Activated CD8-positive, alpha-beta T cell treated with anti-CD3 and anti-CD28 coated beads, Interleukin-2, amount 10 ng/mL, durations not matched to agents 7 days and 5 days (primary cell): ENCODE measurements at regions of chr10 and their contacts with region 1.

Region 1: DNA sequence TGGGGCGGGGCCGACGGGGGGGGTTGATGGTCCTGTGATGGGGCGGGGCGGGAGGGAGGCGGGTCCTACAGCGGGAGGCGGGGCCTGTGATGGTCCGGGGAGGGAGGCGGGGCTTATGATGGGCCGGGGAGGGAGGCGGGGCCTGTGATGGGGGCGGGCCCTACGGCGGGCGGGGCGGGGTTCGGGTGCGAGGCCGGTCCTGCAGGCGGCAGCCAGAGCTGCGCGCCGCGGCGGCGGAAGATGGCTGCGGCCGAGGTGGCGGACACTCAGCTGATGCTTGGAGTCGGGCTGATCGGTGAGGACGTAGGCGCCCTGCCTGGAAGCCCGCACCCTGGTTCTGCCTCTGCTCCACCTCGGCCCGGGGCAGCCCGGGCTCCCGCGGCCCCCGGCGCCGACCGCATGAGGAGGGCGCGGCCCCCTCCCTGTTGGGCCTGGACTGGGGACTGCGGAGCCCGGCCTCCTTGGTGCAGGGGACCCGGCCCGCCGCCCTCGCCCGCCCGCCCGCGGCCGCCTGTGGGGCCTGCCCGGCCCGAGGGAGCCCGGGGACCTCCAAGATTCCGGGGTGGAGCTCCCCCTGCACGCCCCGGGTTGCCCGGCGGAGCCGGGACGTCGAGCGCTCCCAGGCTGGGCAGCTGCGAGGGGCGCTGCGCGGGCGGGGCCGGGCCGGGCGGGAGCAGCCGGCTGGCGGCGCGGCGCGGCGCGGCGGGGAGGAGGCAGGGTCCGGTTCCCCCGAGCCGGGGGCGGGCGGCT is at the start of gene DENND10:
- DNase-seq: peak; percentile 81
- ATAC-seq: peak; percentile 85
- H3K4me3 Mint-ChIP-seq: peak within 1 kb of the TSS; percentile 78
- H3K27ac Mint-ChIP-seq: peak within 1 kb of the TSS; percentile 60
- H3K4me1 Mint-ChIP-seq: peaks cover 31% of the 10 kb centered on the region
- H3K27me3 Mint-ChIP-seq: peaks cover 2% of the 10 kb centered on the region
- total RNA-seq, gene DENND10: 39.9 to 41.3 TPM

Region 2: DNA sequence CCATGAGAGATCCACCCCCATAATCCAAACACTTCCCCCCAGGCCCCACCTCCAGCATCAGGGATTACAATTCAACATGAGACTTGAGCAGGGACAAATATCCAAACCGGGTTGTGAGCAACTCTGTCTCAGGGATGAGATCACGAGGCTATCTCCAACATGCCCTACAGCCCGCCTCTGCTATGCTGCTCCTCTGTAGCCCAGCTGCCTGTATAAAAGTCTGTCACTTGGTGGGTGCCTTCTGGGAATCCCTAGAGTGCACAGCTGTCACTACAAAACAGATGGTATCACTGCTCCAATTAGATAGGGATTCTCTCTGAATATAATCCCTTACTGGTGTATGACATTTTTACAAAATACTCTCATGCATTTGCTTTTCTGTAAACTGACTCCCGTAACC is 189.4 kb before region 1 on chr10:
- CTCF ChIA-PET with region 1: no interaction called
- POLR2A ChIA-PET with region 1: no interaction called
- DNase-seq: no peak
- ATAC-seq: no peak
- H3K4me3 Mint-ChIP-seq: no peak overlapping the region
- H3K27ac Mint-ChIP-seq: no peak overlapping the region
- H3K4me1 Mint-ChIP-seq: no peaks in the 10 kb centered on the region
- H3K27me3 Mint-ChIP-seq: no peaks in the 10 kb centered on the region

Region 3: DNA sequence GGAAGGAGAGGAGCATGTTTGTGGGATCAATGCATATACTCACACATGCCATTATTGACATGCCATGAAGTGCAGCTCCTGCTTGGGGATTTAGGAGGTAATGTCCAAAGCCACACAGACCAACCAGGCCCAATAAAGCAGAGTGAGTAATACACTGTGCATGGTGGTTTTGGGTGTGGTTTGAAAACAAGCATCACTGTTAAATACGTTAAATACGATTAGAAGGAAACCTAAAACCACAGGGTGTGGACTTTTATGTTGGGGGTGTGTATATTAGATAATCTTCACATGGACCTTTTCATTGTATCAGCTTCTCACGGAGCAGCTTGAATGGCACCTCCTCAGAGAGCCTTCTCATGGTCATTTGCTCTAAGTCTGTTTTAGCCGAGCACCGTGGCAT is 13.1 kb before region 1 on chr10:
- CTCF ChIA-PET with region 1: interaction called, 7 read pairs
- POLR2A ChIA-PET with region 1: interaction called, 13 read pairs
- DNase-seq: peak; percentile 71
- ATAC-seq: peak; percentile 87
- H3K4me3 Mint-ChIP-seq: peak overlapping the region; percentile 44
- H3K27ac Mint-ChIP-seq: peak overlapping the region; percentile 90
- H3K4me1 Mint-ChIP-seq: peaks cover 49% of the 10 kb centered on the region
- H3K27me3 Mint-ChIP-seq: peaks cover 3% of the 10 kb centered on the region